ENCODE measurements at regions of chr6 and their contacts with region 1.

Region 1: DNA sequence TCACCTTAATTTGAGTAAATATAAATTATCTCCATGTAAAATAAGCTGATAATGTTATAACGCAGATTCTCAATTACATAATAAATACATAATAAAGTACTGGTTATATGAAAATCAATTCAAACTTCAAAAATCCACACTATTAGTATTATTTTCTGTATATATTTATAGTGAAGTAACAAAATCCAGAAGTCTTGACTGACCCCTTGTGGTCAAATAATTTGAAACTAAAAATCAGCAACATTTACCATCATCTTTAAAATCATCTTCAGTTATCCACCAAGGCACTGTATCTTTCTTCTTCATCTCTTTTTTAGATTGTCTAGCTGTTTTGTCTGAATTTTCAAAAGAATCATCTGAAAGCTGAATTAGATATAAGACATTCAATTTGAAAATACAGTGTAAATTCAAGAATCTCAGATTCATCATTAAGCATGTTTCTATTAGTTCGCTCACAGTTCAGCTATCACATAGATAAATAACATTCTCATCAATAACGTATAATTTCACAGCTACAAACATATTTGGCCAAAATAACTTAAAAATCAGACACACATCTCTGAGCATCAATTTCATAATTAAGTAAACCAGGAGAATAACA is 6.5 kb downstream of the CEP162 start:
- DNase-seq: no peak
- H3K4me3 ChIP-seq: no peak overlapping the region
- H3K27ac ChIP-seq: no peak overlapping the region
- H3K4me1 ChIP-seq: peaks cover 0 to 4% (median 0%) of the 10 kb centered on the region in 4 experiments; a peak in 1 of 7 replicates
- H3K27me3 ChIP-seq: no peaks in the 10 kb centered on the region
- CTCF ChIP-seq: peak in 2 of 3 experiments; percentile 10 to 20; a peak in 2 of 4 replicates
- EP300 ChIP-seq: no peak
- POLR2A ChIP-seq: no peak
- RAD21 ChIP-seq: peak; percentile 54 to 55

Region 2: GRCh38 chr6:83885984-83886383 is 334.9 kb before region 1 on chr6:
- CTCF ChIA-PET with region 1: interaction called, 11 read pairs
- POLR2A ChIA-PET with region 1: no interaction called
- DNase-seq: no peak
- H3K4me3 ChIP-seq: no peak overlapping the region
- H3K27ac ChIP-seq: no peak overlapping the region
- H3K4me1 ChIP-seq: no peaks in the 10 kb centered on the region
- H3K27me3 ChIP-seq: no peaks in the 10 kb centered on the region
- CTCF ChIP-seq: no peak
- EP300 ChIP-seq: no peak
- POLR2A ChIP-seq: no peak
- RAD21 ChIP-seq: no peak

Region 3: GRCh38 chr6:84263557-84263956 is 42.6 kb after region 1 on chr6:
- CTCF ChIA-PET with region 1: no interaction called
- POLR2A ChIA-PET with region 1: no interaction called
- DNase-seq: no peak
- H3K4me3 ChIP-seq: no peak overlapping the region
- H3K27ac ChIP-seq: no peak overlapping the region
- H3K4me1 ChIP-seq: peaks cover 0 to 4% (median 0%) of the 10 kb centered on the region in 4 experiments; a peak in 1 of 7 replicates
- H3K27me3 ChIP-seq: no peaks in the 10 kb centered on the region
- CTCF ChIP-seq: no peak
- EP300 ChIP-seq: no peak
- POLR2A ChIP-seq: no peak
- RAD21 ChIP-seq: no peak

Measured in H1 (cell line).